Activated CD4-positive, alpha-beta T cell treated with anti-CD3 and anti-CD28 coated beads for 36 hours (primary cell): ENCODE measurements at regions of chr12 and their contacts with region 1.

Region 1: DNA sequence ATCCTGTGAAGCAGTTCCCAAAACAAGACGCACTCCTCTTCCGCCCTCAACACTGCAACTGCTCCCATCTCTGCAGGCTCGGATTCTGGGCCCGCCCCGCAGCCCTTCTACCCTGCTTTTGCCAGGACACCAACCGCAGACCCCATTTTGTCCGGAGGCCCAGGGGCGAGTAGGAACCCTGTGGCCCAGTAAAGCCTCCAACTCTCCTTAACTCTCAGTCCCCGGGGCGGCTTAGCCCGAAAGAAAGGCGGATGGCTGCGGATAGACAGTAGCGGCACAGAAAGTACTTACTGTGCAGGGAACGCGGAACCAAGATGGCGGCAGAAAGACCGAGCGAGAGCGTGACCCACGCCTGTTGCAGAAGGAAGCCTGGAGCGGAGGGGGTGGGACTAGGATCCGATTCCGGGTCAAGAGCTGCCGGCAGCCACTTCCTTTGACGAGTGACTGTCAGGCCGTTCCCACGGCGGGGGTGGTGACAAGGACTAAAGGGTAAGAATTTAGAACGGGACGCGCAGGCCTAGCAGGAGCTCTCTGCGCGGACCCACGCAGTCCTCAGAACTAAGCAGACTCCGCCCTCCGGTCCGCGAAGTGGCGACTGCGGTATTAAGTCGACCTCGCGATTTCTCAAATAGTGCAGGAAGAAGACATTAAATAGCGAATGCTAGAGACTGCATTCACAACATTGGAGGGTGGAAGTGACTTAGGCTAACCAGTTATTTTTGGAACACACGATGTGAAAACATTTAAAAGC is at the start of gene NACA:
- DNase-seq: peak; percentile 99
- ATAC-seq: peak; percentile 96
- H3K4me3 Mint-ChIP-seq: peak within 1 kb of the TSS; percentile 97
- H3K27ac Mint-ChIP-seq: peak within 1 kb of the TSS; percentile 99
- H3K4me1 Mint-ChIP-seq: peaks cover 44% of the 10 kb centered on the region
- H3K27me3 Mint-ChIP-seq: no peaks in the 10 kb centered on the region
- total RNA-seq, gene NACA: 1,215 to 1,231 TPM

Region 2: DNA sequence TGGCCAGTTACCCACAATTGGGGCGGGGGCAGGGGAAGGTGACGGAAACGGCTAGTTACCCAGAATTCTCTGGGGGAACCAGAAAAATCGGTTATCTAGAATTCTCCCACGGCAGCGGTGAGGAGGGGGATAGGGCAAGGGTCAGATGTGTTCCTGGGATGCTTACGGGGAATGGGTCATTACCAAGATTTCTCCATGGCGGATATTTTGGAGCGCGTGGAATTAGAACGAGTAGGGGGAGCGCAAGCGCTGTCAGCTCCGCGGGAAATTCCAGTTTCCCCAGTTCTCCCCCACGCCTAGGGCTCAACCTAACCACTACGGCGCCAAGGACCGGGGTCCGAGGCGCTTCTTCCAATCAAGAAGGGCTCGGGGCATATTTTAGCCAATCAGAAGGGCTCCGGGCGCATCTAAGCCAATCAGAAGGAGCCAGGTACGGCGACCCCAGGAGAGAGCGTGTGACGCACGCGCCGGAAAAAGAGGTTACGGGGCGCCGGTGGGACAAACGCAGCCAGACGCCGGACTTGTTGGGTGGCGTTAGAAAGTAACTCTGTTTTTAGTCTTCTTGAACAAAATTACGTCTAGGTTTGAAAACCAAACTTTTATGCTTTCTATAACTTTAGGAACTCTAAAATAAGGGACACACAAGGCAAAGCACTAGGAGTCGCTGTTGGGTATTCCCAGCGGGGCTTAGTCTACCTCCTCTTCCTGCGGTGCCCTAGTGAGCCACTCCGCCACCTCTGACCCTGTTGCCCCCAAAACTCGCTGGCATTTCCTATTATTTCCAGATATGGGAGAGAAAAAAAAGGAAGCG is 391.3 kb before region 1 on chr12 and contains the start of gene PAN2:
- CTCF ChIA-PET with region 1: no interaction called
- POLR2A ChIA-PET with region 1: no interaction called
- intact Hi-C with region 1: loop called in 1 of 2 experiments (anchors 10 kb)
- DNase-seq: peak; percentile 96
- ATAC-seq: peak; percentile 88
- H3K4me3 Mint-ChIP-seq: peak within 1 kb of the TSS; percentile 83
- H3K27ac Mint-ChIP-seq: peak within 1 kb of the TSS; percentile 99
- H3K4me1 Mint-ChIP-seq: peaks cover 37% of the 10 kb centered on the region
- H3K27me3 Mint-ChIP-seq: no peaks in the 10 kb centered on the region
- total RNA-seq, gene PAN2: 54.6 to 62.5 TPM

Region 3: GRCh38 chr12:56593909-56594621 is 131.1 kb before region 1 on chr12:
- CTCF ChIA-PET with region 1: no interaction called
- POLR2A ChIA-PET with region 1: no interaction called
- intact Hi-C with region 1: no loop called
- DNase-seq: peak; percentile 75
- ATAC-seq: peak; percentile 67
- H3K4me3 Mint-ChIP-seq: no peak overlapping the region
- H3K27ac Mint-ChIP-seq: no peak overlapping the region
- H3K4me1 Mint-ChIP-seq: no peaks in the 10 kb centered on the region
- H3K27me3 Mint-ChIP-seq: no peaks in the 10 kb centered on the region

Region 4: DNA sequence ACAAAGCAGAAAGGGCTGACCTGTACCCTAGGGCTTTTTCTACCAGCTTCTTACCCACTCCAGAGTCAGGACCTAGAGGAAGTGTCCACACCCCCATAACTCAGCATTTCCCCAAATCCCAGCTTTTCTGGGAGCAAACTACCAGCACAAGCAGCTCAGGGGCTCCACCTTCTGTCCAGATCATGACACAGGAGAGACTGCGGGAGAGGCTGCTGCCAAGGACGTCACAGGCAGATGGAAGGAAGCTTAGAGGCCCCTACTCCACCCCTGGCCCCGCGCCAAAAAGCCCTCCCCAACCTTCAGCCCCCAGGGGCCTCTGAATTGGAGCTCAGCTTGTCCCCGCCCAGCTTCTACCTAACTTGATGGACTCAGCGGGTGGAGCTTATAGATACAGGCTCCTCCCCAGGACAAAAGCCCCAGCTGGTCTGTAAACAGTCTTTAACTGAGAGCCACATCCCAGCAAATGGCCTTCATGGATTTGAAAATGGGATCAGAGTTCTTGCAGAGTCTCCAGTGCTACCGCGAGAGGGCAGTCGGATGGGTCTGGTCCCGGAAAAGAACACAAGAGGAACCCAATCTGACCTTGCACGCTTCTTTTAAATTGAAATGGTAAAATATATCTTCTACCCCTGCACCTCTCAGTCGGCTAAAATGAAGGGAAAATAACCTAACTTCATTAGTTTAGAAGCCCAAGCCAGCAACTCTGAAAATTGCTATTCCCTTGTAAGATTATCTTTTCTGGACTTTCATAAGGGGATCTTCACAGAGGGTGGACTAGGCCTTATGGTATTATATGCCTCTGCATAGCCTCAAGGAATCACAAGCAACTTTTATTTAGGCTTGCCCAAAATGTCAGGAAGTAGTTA is 88.2 kb before region 1 on chr12:
- CTCF ChIA-PET with region 1: interaction called, 16 read pairs
- POLR2A ChIA-PET with region 1: interaction called, 19 read pairs
- intact Hi-C with region 1: loop called (anchors 1 to 2 kb)
- DNase-seq: peak; percentile 98
- ATAC-seq: peak; percentile 73
- H3K4me3 Mint-ChIP-seq: peak overlapping the region; percentile 87
- H3K27ac Mint-ChIP-seq: peak overlapping the region; percentile 92
- H3K4me1 Mint-ChIP-seq: peaks cover 60% of the 10 kb centered on the region
- H3K27me3 Mint-ChIP-seq: no peaks in the 10 kb centered on the region

Region 5: DNA sequence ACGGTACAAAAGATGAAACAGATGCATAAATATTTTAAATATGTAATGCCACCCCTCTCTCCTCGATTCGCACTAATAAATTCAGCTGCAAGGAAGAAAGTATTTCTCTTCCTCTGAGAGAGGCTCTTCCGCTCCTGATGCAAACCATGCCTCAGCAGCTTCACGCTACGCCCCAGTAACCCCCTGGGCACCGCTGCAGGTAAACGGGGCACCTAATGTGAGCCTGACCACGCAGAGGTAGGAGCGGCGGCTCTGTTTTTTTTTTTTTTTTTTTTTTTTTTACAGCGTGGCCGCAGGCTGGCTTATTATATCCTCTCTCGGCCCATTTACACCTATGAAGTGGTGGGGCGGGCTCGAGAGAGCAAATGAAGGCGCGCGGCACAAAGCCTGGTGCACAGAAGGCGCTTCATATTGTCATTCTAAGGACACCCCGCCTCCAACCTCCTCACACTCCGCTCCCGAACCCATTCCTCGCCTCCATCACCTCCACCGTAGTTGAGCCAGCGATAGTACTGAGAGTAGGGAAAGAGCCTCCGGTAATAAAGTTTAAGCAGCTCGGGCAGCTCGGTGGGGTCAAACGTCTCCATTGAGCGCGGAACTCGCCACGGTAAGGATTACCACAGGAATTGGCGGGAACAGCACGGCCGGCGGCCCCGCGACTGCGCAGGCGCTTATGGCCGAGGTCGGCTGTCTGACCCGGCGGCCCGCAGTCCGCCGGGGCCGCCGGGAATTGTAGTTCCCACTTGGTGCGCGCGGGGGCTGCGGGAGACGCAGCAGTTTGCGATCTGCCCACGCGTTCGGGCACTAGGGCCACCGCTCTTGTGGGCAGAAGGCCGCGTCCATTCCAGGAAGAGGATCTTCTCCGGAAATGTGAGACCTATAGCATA is 26.8 kb after region 1 on chr12 and contains the start of gene PRIM1:
- CTCF ChIA-PET with region 1: interaction called, 3 read pairs
- POLR2A ChIA-PET with region 1: interaction called, 5 read pairs
- intact Hi-C with region 1: loop called (anchors 1 kb)
- DNase-seq: peak; percentile 95
- ATAC-seq: peak; percentile 91
- H3K4me3 Mint-ChIP-seq: peak within 1 kb of the TSS; percentile 84
- H3K27ac Mint-ChIP-seq: peak within 1 kb of the TSS; percentile 99
- H3K4me1 Mint-ChIP-seq: peaks cover 32% of the 10 kb centered on the region
- H3K27me3 Mint-ChIP-seq: no peaks in the 10 kb centered on the region
- total RNA-seq, gene PRIM1: 81.3 to 83.7 TPM

Region 6: GRCh38 chr12:56785141-56785865 is 60.2 kb after region 1 on chr12:
- CTCF ChIA-PET with region 1: no interaction called
- POLR2A ChIA-PET with region 1: no interaction called
- intact Hi-C with region 1: no loop called
- DNase-seq: no peak
- ATAC-seq: no peak
- H3K4me3 Mint-ChIP-seq: no peak overlapping the region
- H3K27ac Mint-ChIP-seq: no peak overlapping the region
- H3K4me1 Mint-ChIP-seq: no peaks in the 10 kb centered on the region
- H3K27me3 Mint-ChIP-seq: no peaks in the 10 kb centered on the region

Region 7: GRCh38 chr12:56987551-56988053 is 262.5 kb after region 1 on chr12:
- CTCF ChIA-PET with region 1: no interaction called
- POLR2A ChIA-PET with region 1: no interaction called
- intact Hi-C with region 1: no loop called
- DNase-seq: peak; percentile 87
- ATAC-seq: peak; percentile 76
- H3K4me3 Mint-ChIP-seq: no peak overlapping the region
- H3K27ac Mint-ChIP-seq: no peak overlapping the region
- H3K4me1 Mint-ChIP-seq: peaks cover 11% of the 10 kb centered on the region
- H3K27me3 Mint-ChIP-seq: no peaks in the 10 kb centered on the region

Region 8: GRCh38 chr12:57229634-57230380 is 504.7 kb after region 1 on chr12 and contains the start of gene SHMT2:
- CTCF ChIA-PET with region 1: no interaction called
- POLR2A ChIA-PET with region 1: no interaction called
- intact Hi-C with region 1: loop called in 1 of 2 experiments (anchors 1 kb)
- DNase-seq: peak; percentile 97
- ATAC-seq: peak; percentile 73
- H3K4me3 Mint-ChIP-seq: peak within 1 kb of the TSS; percentile 100
- H3K27ac Mint-ChIP-seq: peak within 1 kb of the TSS; percentile 99
- H3K4me1 Mint-ChIP-seq: peaks cover 65% of the 10 kb centered on the region
- H3K27me3 Mint-ChIP-seq: peaks cover 19% of the 10 kb centered on the region
- total RNA-seq, gene SHMT2: 436 to 487 TPM

Region 9: GRCh38 chr12:57451233-57451778 is 726.2 kb after region 1 on chr12:
- CTCF ChIA-PET with region 1: no interaction called
- POLR2A ChIA-PET with region 1: no interaction called
- intact Hi-C with region 1: no loop called
- DNase-seq: no peak
- ATAC-seq: no peak
- H3K4me3 Mint-ChIP-seq: no peak overlapping the region
- H3K27ac Mint-ChIP-seq: no peak overlapping the region
- H3K4me1 Mint-ChIP-seq: peaks cover 24% of the 10 kb centered on the region
- H3K27me3 Mint-ChIP-seq: no peaks in the 10 kb centered on the region